ENCODE measurements at regions of chr17 and their contacts with region 1.

Region 1: DNA sequence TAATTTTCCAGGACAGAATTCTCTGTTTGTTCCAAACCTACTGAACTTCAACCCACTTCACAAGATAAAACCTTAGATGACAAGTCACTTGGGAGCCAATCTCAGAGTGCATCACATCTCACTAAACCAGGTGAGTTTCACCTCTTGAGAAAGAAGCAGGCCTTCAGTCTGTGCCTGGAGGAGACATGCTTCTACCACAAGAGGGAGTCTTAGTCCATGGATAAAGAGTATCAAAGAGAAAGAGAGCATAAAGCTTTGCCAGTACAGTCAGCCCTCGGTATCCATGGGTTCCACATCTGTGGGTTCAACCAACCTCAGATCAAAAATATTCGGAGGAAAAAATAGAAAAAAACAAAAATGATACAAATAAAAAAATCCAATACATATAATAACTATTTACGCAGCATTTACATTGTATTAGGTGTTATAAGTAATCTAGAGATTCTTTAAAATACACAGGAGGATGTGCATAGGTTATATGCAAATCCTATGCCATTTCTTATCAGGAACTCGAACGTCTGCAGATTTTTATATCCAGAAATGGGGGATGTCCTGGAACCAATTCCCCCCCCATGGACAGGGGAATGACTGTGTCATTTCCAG is 37.7 kb downstream of the DUSP14 start:
- DNase-seq: peak; percentile 32
- ATAC-seq: peak; percentile 90
- H3K4me3 Mint-ChIP-seq: no peak overlapping the region
- H3K27ac Mint-ChIP-seq: no peak overlapping the region
- H3K4me1 Mint-ChIP-seq: peaks cover 7% of the 10 kb centered on the region
- H3K27me3 Mint-ChIP-seq: no peaks in the 10 kb centered on the region
- CTCF ChIP-seq: peak; percentile 74

Region 2: GRCh38 chr17:37570527-37571093 is 43.3 kb after region 1 on chr17:
- CTCF ChIA-PET with region 1: interaction called, 11 read pairs
- POLR2A ChIA-PET with region 1: no interaction called
- intact Hi-C with region 1: no loop called
- DNase-seq: peak; percentile 63
- ATAC-seq: peak; percentile 90
- H3K4me3 Mint-ChIP-seq: no peak overlapping the region
- H3K27ac Mint-ChIP-seq: no peak overlapping the region
- H3K4me1 Mint-ChIP-seq: peaks cover 11% of the 10 kb centered on the region
- H3K27me3 Mint-ChIP-seq: no peaks in the 10 kb centered on the region
- CTCF ChIP-seq: peak; percentile 40

Region 3: GRCh38 chr17:37609170-37610040 is 82.1 kb after region 1 on chr17 and contains the start of gene SYNRG:
- CTCF ChIA-PET with region 1: interaction called, 14 read pairs
- POLR2A ChIA-PET with region 1: no interaction called
- intact Hi-C with region 1: no loop called
- DNase-seq: peak; percentile 98
- ATAC-seq: peak; percentile 85
- H3K4me3 Mint-ChIP-seq: peak within 1 kb of the TSS; percentile 73
- H3K27ac Mint-ChIP-seq: peak within 1 kb of the TSS; percentile 91
- H3K4me1 Mint-ChIP-seq: peaks cover 36% of the 10 kb centered on the region
- H3K27me3 Mint-ChIP-seq: no peaks in the 10 kb centered on the region
- CTCF ChIP-seq: peak; percentile 60
- total RNA-seq, gene SYNRG: 35.4 to 43.1 TPM

Region 4: GRCh38 chr17:37752482-37752881 is 225.1 kb after region 1 on chr17:
- CTCF ChIA-PET with region 1: no interaction called
- POLR2A ChIA-PET with region 1: no interaction called
- intact Hi-C with region 1: no loop called
- DNase-seq: no peak
- ATAC-seq: no peak
- H3K4me3 Mint-ChIP-seq: no peak overlapping the region
- H3K27ac Mint-ChIP-seq: no peak overlapping the region
- H3K4me1 Mint-ChIP-seq: peaks cover 3% of the 10 kb centered on the region
- H3K27me3 Mint-ChIP-seq: peaks cover 19% of the 10 kb centered on the region
- CTCF ChIP-seq: no peak

Measured in activated CD8-positive, alpha-beta T cell treated with anti-CD3 and anti-CD28 coated beads for 36 hours (primary cell).